Naive thymus-derived CD8-positive, alpha-beta T cell (primary cell): ENCODE measurements at regions of chr20 and their contacts with region 1.

Region 1: GRCh38 chr20:1392823-1393506 is at the start of gene FKBP1A:
- DNase-seq: peak; percentile 82 to 95 (median 90)
- ATAC-seq: peak; percentile 82 to 85
- H3K4me3 Mint-ChIP-seq: peak within 1 kb of the TSS; percentile 82 to 99 (median 96)
- H3K27ac Mint-ChIP-seq: peak within 1 kb of the TSS; percentile 80 to 99 (median 97)
- H3K4me1 Mint-ChIP-seq: peaks cover 30 to 70% (median 66%) of the 10 kb centered on the region in 4 donors
- H3K27me3 Mint-ChIP-seq: peaks cover 0 to 3% (median 0%) of the 10 kb centered on the region in 5 donors
- polyA plus RNA-seq, gene FKBP1A: 47.2 to 50.4 (median 50.1) TPM

Region 2: GRCh38 chr20:1075616-1076015 is 317.3 kb before region 1 on chr20:
- POLR2A ChIA-PET with region 1: no interaction called
- DNase-seq: no peak
- ATAC-seq: no peak
- H3K4me3 Mint-ChIP-seq: no peak overlapping the region
- H3K27ac Mint-ChIP-seq: no peak overlapping the region
- H3K4me1 Mint-ChIP-seq: no peaks in the 10 kb centered on the region
- H3K27me3 Mint-ChIP-seq: peaks cover 0 to 3% (median 0%) of the 10 kb centered on the region in 5 donors

Region 3: DNA sequence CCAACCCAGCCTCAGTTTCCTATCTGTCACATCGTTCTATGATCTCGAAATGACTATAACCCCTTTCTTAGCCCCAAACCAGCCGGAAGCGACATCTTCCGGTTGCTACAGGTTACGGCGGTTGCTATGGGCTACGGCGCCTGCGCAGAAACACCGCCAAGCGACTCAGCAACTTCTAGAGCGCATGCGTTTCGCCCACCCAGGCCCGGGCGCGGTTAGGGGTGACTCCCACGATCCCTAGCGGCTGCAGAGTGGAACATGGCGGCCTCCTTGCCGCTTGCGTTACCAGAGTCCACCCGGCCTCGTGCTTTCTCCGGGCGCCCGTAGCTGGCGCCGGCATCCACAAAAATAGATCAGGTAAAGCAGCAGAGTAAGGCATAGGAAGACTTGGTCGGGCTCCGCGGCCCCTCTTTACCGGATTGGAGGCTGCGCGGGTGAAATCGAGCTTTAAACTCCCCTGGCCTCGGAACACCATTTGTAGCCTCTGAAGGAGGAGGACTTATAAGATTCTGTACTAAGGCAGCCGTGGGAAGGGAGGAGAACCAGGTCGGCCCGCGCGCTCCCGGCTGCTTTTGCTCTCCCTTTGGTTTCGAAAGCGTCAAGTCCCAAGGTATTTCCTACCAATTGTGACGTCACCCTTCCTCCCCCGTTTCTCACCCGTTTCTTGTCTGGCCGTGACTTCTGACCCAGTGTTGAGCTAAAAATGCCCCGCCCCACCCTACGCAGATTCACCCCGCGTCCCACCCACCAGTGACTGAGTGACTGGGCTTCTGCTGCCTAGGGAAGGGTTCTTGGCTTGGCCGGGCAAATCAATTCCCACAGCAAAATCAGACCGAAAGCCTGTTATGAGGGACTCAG is 67.6 kb before region 1 on chr20:
- POLR2A ChIA-PET with region 1: interaction called, 24 read pairs
- DNase-seq: peak; percentile 97 to 100 (median 99)
- ATAC-seq: peak; percentile 83 to 89
- H3K4me3 Mint-ChIP-seq: no peak overlapping the region
- H3K27ac Mint-ChIP-seq: no peak overlapping the region
- H3K4me1 Mint-ChIP-seq: peaks cover 0 to 27% (median 19%) of the 10 kb centered on the region in 4 donors
- H3K27me3 Mint-ChIP-seq: no peaks in the 10 kb centered on the region

Region 4: DNA sequence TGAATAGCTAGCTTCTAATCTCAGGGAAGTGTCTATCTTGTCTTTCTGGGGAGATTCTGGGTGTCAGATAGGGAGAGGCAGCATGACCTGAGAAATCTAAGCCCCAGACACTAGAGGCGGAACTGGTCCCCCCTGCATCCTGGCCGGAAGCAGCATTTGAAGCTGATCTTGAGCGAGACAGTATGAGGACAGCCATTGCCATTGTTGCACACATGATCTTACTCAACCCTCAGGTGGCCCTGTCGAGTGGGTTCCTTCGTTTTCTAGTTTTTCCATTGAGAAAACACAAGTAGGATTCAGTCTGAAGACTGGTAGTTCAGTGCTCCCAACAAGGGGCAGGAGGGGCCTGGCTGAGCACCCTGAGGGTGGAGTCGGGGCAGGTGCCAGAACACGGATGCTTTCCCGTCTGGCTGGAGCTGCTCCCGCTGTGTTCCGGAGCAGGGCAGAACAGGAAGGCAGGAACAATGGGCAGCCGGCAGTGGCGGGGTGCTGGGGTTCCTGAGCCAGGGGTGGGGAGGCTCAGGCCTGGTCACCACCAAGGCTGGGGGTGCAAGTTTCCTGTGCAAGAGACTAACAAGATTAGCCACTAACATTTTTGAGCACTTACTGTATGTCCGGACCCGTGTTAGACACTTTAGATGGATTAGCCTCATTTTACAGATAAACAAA is 56.1 kb before region 1 on chr20:
- POLR2A ChIA-PET with region 1: interaction called, 11 read pairs
- DNase-seq: peak in 5 of 10 donors; percentile 15 to 43 (median 33)
- ATAC-seq: peak; percentile 92 to 96
- H3K4me3 Mint-ChIP-seq: peak overlapping the region; percentile 30 to 78 (median 66)
- H3K27ac Mint-ChIP-seq: peak overlapping the region; percentile 80 to 95 (median 90)
- H3K4me1 Mint-ChIP-seq: peaks cover 21 to 34% (median 25%) of the 10 kb centered on the region in 4 donors
- H3K27me3 Mint-ChIP-seq: no peaks in the 10 kb centered on the region